Mammary epithelial cell (primary cell): ENCODE measurements at regions of chr15 and their contacts with region 1.

Region 1: DNA sequence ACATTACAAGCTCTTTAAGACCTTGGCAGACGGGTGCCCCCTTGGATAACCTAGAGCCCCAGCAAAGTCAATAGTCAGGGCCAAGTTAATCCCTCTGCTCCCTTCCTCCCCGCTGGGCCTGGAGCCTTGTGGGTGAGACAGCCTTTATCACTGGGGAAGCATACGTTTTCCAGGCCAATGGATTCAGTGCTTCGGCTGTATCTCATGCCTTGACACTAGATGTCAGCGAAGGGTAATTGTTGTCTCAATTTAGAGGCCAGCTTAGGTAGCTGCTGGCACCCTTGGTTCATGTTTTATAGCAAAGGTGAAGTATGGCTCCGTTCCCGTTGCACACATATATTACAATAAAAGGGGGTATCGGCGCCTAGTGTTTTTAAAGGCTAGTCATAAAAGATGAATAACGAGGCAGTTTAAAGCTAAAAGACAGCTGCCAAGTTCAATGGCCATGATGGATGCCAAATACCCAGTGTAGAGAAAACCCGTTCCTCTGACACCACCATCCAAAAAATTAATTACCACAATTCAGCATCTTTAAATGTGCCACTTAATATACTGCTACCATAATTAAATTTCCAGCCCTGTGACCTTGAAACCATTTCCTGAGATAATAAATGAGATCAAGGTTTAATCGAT is 52.3 kb upstream of the BNIP2 start:
- DNase-seq: peak; percentile 13
- H3K4me3 ChIP-seq: no peak overlapping the region
- H3K27ac ChIP-seq: no peak overlapping the region
- H3K4me1 ChIP-seq: no peaks in the 10 kb centered on the region
- H3K27me3 ChIP-seq: no peaks in the 10 kb centered on the region
- CTCF ChIP-seq: peak; percentile 27 to 56

Region 2: GRCh38 chr15:59997070-59997701 is 255.8 kb after region 1 on chr15:
- CTCF ChIA-PET with region 1: no interaction called
- dilution Hi-C with region 1: no loop called
- in situ Hi-C with region 1: no loop called
- intact Hi-C with region 1: loop called (anchors 5 kb)
- DNase-seq: peak; percentile 38
- H3K4me3 ChIP-seq: no peak overlapping the region
- H3K27ac ChIP-seq: no peak overlapping the region
- H3K4me1 ChIP-seq: peaks cover 8% of the 10 kb centered on the region
- H3K27me3 ChIP-seq: peaks cover 91% of the 10 kb centered on the region
- CTCF ChIP-seq: peak in 1 of 2 donors; percentile 32

Region 3: DNA sequence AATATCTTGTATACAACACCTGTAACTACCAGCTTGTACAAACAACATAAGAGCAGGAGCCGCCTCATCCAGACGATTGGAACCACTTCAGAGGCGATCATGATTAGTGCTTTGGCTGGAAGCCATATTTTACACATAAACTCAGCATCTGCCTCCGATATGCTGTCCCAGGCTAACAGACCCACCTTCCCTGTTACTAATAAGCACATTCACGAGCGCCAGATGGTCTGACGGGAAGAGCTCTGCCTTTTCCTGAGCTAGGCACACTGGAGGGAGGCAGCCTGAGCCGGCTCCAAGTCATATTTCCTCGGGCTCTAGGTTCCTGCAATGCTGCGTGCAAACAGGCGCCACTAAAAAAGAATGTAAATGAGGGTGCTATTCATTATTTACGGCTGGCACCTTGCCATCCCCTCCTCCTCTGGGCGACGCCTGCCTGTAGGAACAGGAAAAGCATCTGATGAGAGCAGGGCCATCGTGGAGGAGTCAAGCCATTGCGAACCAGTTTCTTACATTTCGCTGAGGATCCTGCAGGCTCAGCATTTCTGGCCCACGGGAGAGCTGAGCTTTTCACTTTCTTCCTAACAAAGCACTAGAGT is 558.2 kb after region 1 on chr15:
- CTCF ChIA-PET with region 1: no interaction called
- dilution Hi-C with region 1: no loop called
- in situ Hi-C with region 1: loop called in 1 of 2 experiments (anchors 25 kb)
- intact Hi-C with region 1: no loop called
- DNase-seq: peak; percentile 56
- H3K4me3 ChIP-seq: no peak overlapping the region
- H3K27ac ChIP-seq: no peak overlapping the region
- H3K4me1 ChIP-seq: peaks cover 15% of the 10 kb centered on the region
- H3K27me3 ChIP-seq: no peaks in the 10 kb centered on the region
- CTCF ChIP-seq: peak in 1 of 2 donors; percentile 33